A549 (cell line): ENCODE measurements at regions of chr20 and their contacts with region 1.

Region 1: DNA sequence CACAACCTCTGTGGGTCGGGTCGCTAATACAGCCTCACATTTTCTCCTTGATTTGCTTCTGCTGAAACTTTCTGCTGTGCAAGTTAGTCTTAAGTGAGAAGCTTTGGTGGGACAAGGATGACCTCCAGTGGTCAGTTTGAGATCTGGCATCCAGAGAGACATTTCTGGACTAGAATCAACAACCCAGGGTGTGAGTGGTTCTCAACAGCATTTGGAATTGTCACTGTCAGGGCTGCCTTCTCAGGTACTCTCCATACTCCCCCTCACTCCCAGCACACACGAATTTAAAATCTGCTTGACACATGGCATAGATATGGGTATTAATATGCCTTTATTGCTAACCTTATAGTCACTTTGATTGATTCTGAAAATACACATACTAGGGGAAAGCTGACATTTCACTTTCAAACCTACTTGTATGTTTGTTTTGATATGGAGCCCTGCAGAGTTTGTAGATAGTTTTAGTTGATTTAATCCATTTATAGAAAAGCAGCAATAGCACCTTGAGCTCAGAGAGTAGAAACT is 13.2 kb downstream of the OTOR start:
- DNase-seq: peak; percentile 78 to 83
- ATAC-seq: peak; percentile 86 to 95
- H3K4me3 ChIP-seq: no peak overlapping the region
- H3K27ac ChIP-seq: no peak overlapping the region
- H3K4me1 ChIP-seq: no peaks in the 10 kb centered on the region
- CTCF ChIP-seq: peak; percentile 93
- EP300 ChIP-seq: no peak
- POLR2A ChIP-seq: no peak
- RAD21 ChIP-seq: peak; percentile 94 to 96

Region 2: DNA sequence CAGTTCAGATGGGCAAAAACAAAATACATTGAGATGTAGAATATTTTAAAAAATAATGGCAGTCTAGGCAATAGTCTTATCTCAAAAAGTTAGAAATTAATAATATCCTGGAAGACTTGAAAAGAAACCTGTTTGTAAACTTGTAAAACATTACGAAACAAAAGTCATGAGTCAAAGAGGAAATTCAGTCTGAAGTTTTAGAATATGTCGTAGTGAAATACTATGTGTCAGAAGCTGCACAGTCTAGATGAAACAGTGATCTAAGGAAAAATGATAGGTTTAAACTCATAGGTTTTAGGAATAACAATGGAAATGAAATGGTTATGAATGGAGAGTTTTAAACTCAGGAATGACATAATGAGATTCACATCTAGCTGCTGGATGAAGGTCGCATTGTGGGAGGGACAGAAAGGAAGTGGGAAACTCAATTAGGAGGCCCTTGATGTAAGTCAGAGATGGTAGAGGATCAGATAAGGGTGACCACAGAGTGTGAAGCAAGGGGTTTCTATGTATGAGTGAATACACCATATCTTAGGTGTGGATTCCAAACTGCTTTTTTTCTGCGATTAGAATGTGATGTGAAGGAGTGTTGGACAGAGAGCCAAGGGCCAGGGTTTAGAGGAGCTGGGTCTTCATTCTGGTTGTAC is 28.7 kb before region 1 on chr20:
- CTCF ChIA-PET with region 1: interaction called, 25 read pairs
- POLR2A ChIA-PET with region 1: no interaction called
- DNase-seq: no peak
- ATAC-seq: no peak
- H3K4me3 ChIP-seq: no peak overlapping the region
- H3K27ac ChIP-seq: no peak overlapping the region
- H3K4me1 ChIP-seq: peaks cover 7% of the 10 kb centered on the region
- CTCF ChIP-seq: no peak
- EP300 ChIP-seq: no peak
- POLR2A ChIP-seq: no peak
- RAD21 ChIP-seq: no peak

Region 3: DNA sequence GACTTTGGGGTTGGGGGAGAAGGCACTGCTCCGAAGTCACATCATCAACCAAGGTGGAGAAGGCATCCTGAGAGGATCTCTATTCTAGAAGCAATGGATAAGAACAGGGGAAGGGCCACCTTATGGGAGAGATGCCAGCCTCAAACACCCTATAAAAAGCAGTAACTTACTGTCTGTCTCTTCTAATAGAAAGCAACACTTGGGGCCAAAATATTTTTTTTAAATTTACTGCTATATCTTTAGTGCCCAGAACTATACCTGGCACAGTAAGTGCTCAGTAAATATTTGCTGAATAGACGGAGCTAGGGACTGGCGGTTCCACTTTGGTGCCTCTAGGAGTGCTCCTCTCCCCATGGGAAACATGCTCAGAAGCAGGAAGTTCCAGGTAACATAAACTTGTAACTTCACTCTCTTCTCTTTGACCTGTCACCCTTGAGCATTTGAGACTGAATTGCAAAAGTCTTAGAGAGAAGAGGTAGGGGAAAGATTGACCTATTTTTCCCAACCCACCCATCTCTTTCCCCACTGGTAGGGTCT is 14.0 kb before region 1 on chr20:
- CTCF ChIA-PET with region 1: interaction called, 56 read pairs
- POLR2A ChIA-PET with region 1: no interaction called
- DNase-seq: peak in 1 of 2 experiments; percentile 22
- ATAC-seq: peak; percentile 82 to 89
- H3K4me3 ChIP-seq: no peak overlapping the region
- H3K27ac ChIP-seq: no peak overlapping the region
- H3K4me1 ChIP-seq: no peaks in the 10 kb centered on the region
- CTCF ChIP-seq: no peak
- EP300 ChIP-seq: no peak
- POLR2A ChIP-seq: no peak
- RAD21 ChIP-seq: no peak

Region 4: GRCh38 chr20:16777126-16777525 is 15.8 kb after region 1 on chr20:
- CTCF ChIA-PET with region 1: interaction called, 34 read pairs
- POLR2A ChIA-PET with region 1: no interaction called
- DNase-seq: no peak
- ATAC-seq: no peak
- H3K4me3 ChIP-seq: no peak overlapping the region
- H3K27ac ChIP-seq: no peak overlapping the region
- H3K4me1 ChIP-seq: no peaks in the 10 kb centered on the region
- CTCF ChIP-seq: no peak
- EP300 ChIP-seq: no peak
- POLR2A ChIP-seq: no peak
- RAD21 ChIP-seq: no peak

Region 5: DNA sequence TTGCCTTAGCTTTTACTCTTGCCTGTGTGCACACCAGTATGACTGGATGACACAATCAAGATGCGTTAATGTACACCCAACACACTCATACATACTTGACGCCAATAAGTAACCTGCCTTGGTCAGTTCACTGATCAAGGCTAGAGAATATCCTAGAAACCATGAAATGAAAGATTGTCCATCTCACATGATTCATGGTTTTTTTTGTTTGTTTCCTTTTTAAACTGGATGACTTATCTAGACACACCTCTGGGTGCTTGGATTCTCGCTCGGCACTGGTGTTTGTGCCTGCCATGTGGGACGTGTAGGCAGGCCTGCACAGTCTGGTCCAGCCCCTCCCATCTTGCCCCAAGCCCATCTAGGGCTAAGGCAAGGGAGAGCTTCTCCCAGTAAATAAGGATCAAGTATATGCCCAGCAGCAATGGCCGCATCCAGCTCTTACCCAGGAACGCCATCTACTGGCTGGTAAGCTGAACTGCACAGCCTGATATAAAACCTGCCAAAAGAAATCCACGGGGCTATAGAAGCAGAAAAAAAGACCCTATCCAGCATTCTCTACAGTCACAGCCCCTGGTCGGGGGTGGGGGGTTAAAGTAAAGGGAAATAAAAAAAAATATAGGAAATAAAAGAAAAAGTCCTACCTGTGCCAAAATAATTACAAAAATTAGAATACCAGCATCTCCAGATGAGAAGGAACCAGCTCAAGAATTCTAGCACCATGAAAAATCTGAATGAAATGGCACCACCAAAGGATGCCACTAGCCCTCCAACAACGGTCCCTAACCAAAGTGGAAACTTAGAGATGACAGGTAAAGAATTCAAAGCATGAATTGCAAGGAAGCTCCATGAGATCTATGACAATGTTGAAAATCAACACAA is 60.1 kb after region 1 on chr20:
- CTCF ChIA-PET with region 1: no interaction called
- POLR2A ChIA-PET with region 1: no interaction called
- DNase-seq: peak; percentile 37 to 65
- ATAC-seq: peak; percentile 62 to 88
- H3K4me3 ChIP-seq: no peak overlapping the region
- H3K27ac ChIP-seq: no peak overlapping the region
- H3K4me1 ChIP-seq: no peaks in the 10 kb centered on the region
- CTCF ChIP-seq: peak; percentile 67
- EP300 ChIP-seq: no peak
- POLR2A ChIP-seq: no peak
- RAD21 ChIP-seq: peak; percentile 50 to 61; a peak in 4 of 5 replicates

Region 6: GRCh38 chr20:17357218-17357617 is 595.9 kb after region 1 on chr20:
- CTCF ChIA-PET with region 1: no interaction called
- POLR2A ChIA-PET with region 1: no interaction called
- DNase-seq: no peak
- ATAC-seq: no peak
- H3K4me3 ChIP-seq: no peak overlapping the region
- H3K27ac ChIP-seq: no peak overlapping the region
- H3K4me1 ChIP-seq: no peaks in the 10 kb centered on the region
- CTCF ChIP-seq: no peak
- EP300 ChIP-seq: no peak
- POLR2A ChIP-seq: no peak
- RAD21 ChIP-seq: no peak